ENCODE measurements at regions of chr16 and their contacts with region 1.

Region 1: GRCh38 chr16:28846080-28846932 is at the start of gene TUFM:
- DNase-seq: peak; percentile 96
- H3K27ac ChIP-seq: peak within 1 kb of the TSS; percentile 80
- CTCF ChIP-seq: peak; percentile 84

Region 2: DNA sequence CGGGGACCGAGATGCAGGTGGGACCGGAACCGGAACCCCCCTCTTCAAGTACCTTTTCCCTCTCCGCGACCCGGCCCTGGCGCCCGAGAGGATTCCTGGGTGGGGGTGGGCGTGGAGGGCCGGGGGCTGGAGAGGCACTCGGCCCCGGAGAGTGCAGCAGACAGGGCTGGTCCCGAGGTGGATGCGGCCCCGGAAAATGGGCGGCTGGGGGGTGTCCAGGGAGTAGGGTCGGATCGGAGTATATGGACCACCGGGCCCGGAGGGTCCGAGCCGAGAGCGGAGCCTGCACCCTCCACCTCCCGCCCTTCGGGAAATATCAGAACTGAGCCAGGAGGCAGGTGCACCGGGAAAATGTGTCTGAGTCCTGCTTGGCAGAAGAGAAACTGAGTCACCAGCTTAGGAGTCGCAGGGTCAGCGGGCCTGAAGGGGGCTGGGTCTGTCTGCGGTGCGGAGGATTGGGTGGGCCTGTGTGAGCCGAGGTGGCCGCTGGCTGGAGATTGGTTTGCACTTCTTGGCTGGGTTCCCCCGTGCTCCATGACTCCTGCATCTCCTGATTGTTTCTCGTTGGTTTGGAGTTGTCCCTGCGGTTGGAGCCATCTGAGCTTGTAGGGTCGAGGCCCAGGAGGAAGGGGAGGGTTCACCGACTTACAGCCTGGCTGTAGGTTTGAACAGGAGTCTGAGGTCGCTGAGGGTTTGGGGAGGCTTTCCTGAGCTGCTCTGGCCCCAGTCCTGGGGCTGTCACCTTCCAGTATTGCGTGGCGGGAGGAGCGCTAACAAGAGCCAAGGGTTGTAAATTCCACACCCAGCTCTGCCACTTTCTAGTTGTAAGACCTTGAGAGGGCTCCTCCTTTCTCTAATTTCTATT is 17.9 kb after region 1 on chr16:
- CTCF ChIA-PET with region 1: interaction called, 3 read pairs
- POLR2A ChIA-PET with region 1: interaction called, 13 read pairs
- DNase-seq: no peak
- H3K27ac ChIP-seq: peak overlapping the region; percentile 92
- CTCF ChIP-seq: no peak

Region 3: DNA sequence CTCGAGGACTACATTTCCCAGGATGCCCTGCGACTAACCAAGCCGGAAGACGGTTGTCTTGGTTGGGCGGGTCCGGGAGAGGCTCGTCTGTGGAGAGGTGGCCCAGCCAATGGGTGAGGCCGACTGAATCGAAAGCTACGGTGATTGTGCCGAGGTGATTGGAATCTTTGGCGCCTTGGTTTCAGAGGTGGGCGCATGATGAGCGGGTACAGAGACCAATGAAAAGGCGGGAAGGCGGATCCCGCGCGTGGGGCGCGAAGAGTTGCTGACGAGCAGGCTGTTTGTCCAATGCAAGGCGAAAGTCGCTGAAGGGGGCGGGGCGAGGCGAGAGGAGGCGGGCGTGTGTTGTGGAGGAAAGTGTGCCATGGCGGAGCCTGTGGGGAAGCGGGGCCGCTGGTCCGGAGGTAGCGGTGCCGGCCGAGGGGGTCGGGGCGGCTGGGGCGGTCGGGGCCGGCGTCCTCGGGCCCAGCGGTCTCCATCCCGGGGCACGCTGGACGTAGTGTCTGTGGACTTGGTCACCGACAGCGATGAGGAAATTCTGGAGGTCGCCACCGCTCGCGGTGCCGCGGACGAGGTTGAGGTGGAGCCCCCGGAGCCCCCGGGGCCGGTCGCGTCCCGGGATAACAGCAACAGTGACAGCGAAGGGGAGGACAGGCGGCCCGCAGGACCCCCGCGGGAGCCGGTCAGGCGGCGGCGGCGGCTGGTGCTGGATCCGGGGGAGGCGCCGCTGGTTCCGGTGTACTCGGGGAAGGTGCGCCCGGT is 104.5 kb after region 1 on chr16 and contains the start of gene NFATC2IP:
- CTCF ChIA-PET with region 1: interaction called, 11 read pairs
- POLR2A ChIA-PET with region 1: no interaction called
- DNase-seq: peak; percentile 100
- H3K27ac ChIP-seq: peak within 1 kb of the TSS; percentile 84
- CTCF ChIP-seq: no peak

Region 4: GRCh38 chr16:29694384-29695195 is 848.3 kb after region 1 on chr16:
- CTCF ChIA-PET with region 1: no interaction called
- POLR2A ChIA-PET with region 1: no interaction called
- DNase-seq: no peak
- H3K27ac ChIP-seq: no peak overlapping the region
- CTCF ChIP-seq: no peak

Measured in RWPE1 (cell line).